ENCODE measurements at regions of chr6 and their contacts with region 1.

Region 1: DNA sequence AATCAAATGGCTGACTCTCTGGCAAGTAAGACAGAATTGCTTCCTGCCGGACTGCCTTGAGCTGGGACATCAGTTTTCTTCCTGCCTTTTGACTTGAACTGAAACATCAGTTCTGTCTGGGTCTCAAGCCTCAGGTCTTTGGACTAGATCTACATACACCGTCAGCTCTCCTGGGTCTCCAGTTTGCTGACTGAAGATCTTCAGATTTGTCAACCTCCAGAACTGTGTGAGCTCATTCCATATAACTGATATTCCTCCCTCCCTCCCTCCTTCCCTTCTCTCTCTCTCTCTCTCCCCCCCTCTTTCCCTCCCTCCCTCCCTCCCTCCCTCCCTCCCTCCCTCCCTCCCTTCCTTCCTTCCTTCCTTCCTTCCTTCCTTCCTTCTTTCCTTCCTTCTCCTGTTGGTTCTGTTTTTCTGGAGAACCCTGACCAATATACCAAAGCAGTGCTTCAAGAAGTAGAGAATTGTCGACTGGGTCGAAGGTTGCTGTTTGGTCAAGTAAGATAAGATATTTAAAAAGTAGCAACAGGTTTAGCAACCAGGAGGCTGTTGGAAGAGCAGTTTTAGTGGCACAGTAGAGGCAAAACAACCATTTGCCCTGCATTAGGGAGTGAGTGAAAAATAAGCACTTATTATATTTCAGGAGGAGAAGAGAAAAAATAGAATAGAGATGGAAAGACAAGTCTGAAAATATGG is 33.1 kb upstream of the CMTR1 start:
- DNase-seq: no peak
- H3K4me3 ChIP-seq: no peak overlapping the region
- H3K27ac ChIP-seq: no peak overlapping the region
- H3K4me1 ChIP-seq: no peaks in the 10 kb centered on the region
- H3K27me3 ChIP-seq: no peaks in the 10 kb centered on the region
- CTCF ChIP-seq: no peak

Region 2: GRCh38 chr6:36280467-36280866 is 1119.5 kb before region 1 on chr6:
- intact Hi-C with region 1: no loop called
- DNase-seq: no peak
- H3K4me3 ChIP-seq: no peak overlapping the region
- H3K27ac ChIP-seq: no peak overlapping the region
- H3K4me1 ChIP-seq: no peaks in the 10 kb centered on the region
- H3K27me3 ChIP-seq: peaks cover 0 to 20% of the 10 kb centered on the region in 2 donors
- CTCF ChIP-seq: no peak

Region 3: DNA sequence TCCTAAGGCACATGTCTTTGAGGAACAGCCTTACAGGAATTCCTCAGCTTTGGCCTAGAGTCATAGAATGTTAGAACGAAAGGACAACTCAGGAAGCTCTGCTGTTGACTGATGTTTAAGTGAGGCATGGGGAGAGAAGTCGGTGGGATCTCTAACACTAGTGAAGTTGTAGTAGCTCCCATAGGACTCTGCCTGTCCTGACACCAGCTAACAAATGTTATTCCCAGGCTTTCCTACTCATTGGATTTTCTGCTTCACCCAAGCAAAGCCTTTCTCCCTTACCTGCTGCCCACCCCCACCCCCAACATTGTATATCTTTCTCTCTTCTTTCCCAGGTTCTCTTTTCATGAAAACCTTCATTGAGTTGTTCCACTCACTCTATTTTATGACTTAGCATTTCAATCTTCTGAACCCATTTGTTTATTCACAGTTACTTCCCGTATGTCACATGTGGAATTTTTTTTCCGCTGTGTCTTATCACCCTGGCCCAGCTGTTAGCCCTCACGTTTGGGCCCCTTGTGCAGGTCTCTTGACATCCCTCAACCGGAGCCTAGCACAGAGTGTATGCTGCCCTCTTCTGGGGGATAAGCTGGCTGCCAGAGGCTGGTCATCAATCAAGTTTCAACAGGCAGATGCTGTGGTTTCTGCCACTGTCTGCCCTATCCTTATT is 85.3 kb before region 1 on chr6:
- intact Hi-C with region 1: no loop called
- DNase-seq: no peak
- H3K4me3 ChIP-seq: no peak overlapping the region
- H3K27ac ChIP-seq: no peak overlapping the region
- H3K4me1 ChIP-seq: no peaks in the 10 kb centered on the region
- H3K27me3 ChIP-seq: no peaks in the 10 kb centered on the region
- CTCF ChIP-seq: peak in 1 of 2 experiments; percentile 23

Region 4: DNA sequence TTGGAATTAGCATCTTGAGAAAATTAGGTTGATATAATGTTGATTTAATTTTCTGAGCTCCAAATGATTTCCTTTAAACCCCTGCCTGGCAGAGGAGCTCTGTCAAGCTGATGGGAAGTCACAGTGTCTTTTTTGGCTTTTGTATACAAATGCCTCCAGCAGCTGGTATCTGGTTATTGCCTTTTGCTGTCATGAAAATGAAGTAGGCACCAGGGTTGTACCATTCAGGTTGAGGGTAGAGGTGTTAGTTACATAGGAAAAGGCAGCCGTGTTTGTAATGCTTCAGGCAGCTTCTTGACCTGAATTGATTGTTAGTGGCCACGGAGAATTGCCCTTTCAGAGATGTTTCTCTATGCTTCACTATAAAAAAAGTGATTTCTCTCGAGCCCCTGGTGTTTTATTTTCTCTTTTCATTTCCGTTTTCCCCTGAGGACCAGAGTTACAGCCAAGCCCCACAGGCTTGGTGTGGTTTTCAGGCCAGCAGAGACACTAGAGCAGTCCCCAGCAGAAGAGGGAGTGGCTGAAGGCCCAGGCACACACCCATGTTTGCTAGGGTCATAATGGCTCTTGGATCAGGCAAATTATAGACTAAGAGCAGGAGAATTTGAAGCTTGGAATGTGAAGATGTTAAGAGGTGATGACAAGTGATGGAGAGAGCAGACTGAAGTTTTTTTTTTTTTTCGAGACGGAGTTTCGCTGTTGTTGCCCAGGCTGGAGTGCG is 54.6 kb after region 1 on chr6:
- intact Hi-C with region 1: loop called (anchors 5 kb)
- DNase-seq: no peak
- H3K4me3 ChIP-seq: no peak overlapping the region
- H3K27ac ChIP-seq: no peak overlapping the region
- H3K4me1 ChIP-seq: no peaks in the 10 kb centered on the region
- H3K27me3 ChIP-seq: no peaks in the 10 kb centered on the region
- CTCF ChIP-seq: no peak